HCT116 (cell line): ENCODE measurements at regions of chr2 and their contacts with region 1.

Region 1: GRCh38 chr2:119158563-119159347 is at the start of gene C1QL2:
- DNase-seq: no peak
- ATAC-seq: no peak
- H3K4me3 ChIP-seq: no peak within 1 kb of the TSS
- H3K27ac ChIP-seq: no peak within 1 kb of the TSS
- H3K4me1 ChIP-seq: no peaks in the 10 kb centered on the region
- H3K27me3 ChIP-seq: peaks cover 24% of the 10 kb centered on the region
- CTCF ChIP-seq: no peak
- POLR2A ChIP-seq: no peak
- RAD21 ChIP-seq: no peak
- total RNA-seq, gene C1QL2: not detected

Region 2: DNA sequence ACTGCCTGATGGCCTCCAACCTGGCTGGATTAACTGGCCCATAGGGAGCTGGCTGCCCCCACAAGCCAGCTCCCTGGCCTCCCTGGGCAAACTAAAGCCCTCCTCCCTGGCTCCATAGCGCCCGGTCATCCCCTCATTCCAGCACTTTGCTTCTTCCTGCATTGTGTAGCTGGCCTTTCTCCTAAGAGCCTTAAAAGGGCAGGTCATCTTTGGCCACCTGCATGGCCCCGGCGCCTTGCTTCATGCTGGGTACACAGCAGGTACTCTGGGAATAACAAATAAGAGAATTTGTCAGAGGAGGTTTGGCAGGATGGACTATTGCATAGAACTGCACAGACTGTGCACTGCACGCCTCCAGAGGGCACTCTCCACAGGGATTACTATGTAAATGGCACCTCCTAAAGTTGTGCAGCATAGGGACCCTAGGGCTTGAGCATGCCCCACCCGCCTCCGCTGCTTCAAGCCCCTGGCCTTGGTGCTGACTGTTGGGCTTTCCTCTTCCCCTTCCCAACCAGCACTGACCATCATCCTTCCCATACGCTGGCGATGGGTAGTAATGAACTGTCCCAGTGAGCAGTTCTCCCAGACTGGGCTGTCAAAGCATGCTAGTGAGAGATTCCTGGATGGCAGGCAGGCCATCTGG is 75.7 kb after region 1 on chr2:
- CTCF ChIA-PET with region 1: no interaction called
- POLR2A ChIA-PET with region 1: no interaction called
- RAD21 ChIA-PET with region 1: no interaction called
- intact Hi-C with region 1: loop called (anchors 1 kb)
- DNase-seq: no peak
- ATAC-seq: peak; percentile 92
- H3K4me3 ChIP-seq: no peak overlapping the region
- H3K27ac ChIP-seq: no peak overlapping the region
- H3K4me1 ChIP-seq: peaks cover 3 to 13% of the 10 kb centered on the region in 2 experiments
- H3K27me3 ChIP-seq: no peaks in the 10 kb centered on the region
- CTCF ChIP-seq: peak; percentile 70 to 77 (median 73)
- POLR2A ChIP-seq: no peak
- RAD21 ChIP-seq: peak; percentile 84